AG04449 (cell line): ENCODE measurements at regions of chr12 and their contacts with region 1.

Region 1: GRCh38 chr12:45388545-45388944 is 172.7 kb downstream of the ANO6 start:
- DNase-seq: no peak
- H3K4me3 ChIP-seq: no peak overlapping the region
- CTCF ChIP-seq: peak; percentile 66

Region 2: GRCh38 chr12:45170456-45171042 is 218.0 kb before region 1 on chr12:
- CTCF ChIA-PET with region 1: interaction called, 50 read pairs
- POLR2A ChIA-PET with region 1: no interaction called
- DNase-seq: peak; percentile 10
- H3K4me3 ChIP-seq: no peak overlapping the region
- CTCF ChIP-seq: peak; percentile 87

Region 3: GRCh38 chr12:45183246-45183645 is 205.3 kb before region 1 on chr12:
- CTCF ChIA-PET with region 1: interaction called, 97 read pairs
- POLR2A ChIA-PET with region 1: no interaction called
- DNase-seq: no peak
- H3K4me3 ChIP-seq: no peak overlapping the region
- CTCF ChIP-seq: peak; percentile 12

Region 4: DNA sequence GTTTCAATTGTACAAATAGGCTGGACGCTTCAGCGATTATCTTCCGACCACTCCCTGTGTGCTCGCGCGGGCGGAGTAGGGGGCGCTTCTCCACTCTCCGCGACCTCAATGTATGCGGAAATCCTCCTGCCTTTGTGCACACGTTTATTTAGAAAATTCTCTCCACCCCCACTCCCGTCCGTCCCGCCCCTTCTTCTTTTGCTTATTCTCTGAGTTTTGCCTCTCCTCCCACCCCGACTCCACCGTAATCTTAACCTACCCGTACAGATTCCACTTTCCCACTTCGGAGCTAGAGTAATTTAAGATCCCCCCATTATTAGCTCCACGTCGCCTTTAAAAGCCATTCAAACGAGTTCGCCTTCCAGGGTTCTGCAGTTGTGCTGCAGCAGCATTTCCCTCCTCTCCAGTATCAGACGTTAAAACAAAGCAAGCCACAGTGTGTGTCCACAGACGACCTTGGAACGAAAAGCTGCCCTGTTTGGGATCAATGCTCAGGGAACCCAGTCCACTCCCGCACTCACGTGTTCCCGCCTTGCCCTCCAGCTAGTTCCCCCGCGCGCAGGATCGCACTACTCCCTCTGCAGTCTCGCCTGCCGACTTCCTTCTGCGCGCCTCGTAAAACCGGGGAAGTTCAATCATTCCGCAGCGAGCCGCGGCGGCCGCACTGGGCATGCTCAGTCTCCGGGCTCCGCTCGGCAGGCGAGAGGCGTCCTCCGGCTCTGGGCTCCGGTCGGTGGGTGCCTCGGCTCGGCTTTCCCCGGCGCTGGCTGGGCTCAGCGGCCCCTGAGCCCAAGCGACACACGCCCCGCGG is 172.9 kb before region 1 on chr12 and contains the start of gene ANO6:
- CTCF ChIA-PET with region 1: interaction called, 38 read pairs
- POLR2A ChIA-PET with region 1: no interaction called
- DNase-seq: no peak
- H3K4me3 ChIP-seq: peak within 1 kb of the TSS; percentile 85
- CTCF ChIP-seq: peak; percentile 61

Region 5: GRCh38 chr12:45268672-45269411 is 119.7 kb before region 1 on chr12:
- CTCF ChIA-PET with region 1: interaction called, 11 read pairs
- POLR2A ChIA-PET with region 1: no interaction called
- DNase-seq: peak; percentile 69
- H3K4me3 ChIP-seq: peak overlapping the region; percentile 4; the same call in 1 of the 2 replicates
- CTCF ChIP-seq: peak; percentile 28

Region 6: GRCh38 chr12:45402288-45402687 is 13.7 kb after region 1 on chr12:
- CTCF ChIA-PET with region 1: interaction called, 39 read pairs
- POLR2A ChIA-PET with region 1: no interaction called
- DNase-seq: no peak
- H3K4me3 ChIP-seq: no peak overlapping the region
- CTCF ChIP-seq: no peak

Region 7: DNA sequence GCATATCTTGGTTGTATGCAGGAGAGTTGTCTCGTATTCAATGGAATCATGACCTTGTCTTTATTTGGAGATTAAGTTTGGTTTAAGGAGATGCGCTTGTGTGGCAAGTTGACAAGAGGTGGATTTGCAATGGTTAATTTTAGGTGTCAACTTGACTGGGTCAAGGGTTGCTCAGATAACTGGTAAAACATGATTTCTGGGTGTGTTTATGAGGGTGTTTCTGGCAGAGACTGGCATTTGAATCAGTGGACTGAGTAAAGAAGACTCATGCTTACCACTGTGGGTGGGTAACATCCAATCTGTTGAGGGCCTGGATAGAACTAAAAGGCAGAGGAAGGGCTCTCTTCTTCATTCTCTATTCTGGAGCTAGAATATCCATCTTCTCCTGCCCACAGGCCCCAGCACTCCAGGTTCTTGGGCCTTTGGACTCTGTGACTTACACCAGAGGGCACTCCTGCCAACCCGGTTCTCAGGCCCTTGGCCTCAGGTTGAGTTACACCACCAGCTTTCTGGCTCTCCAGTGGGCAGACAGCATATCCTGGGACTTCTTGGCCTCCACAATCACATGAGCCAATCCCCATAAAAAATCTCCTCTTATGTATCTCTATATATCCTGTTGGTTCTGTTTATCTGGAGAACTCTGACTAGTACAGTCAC is 199.5 kb after region 1 on chr12:
- CTCF ChIA-PET with region 1: no interaction called
- POLR2A ChIA-PET with region 1: no interaction called
- DNase-seq: no peak
- H3K4me3 ChIP-seq: no peak overlapping the region
- CTCF ChIP-seq: no peak